ENCODE measurements at regions of chr17 and their contacts with region 1.

Region 1: DNA sequence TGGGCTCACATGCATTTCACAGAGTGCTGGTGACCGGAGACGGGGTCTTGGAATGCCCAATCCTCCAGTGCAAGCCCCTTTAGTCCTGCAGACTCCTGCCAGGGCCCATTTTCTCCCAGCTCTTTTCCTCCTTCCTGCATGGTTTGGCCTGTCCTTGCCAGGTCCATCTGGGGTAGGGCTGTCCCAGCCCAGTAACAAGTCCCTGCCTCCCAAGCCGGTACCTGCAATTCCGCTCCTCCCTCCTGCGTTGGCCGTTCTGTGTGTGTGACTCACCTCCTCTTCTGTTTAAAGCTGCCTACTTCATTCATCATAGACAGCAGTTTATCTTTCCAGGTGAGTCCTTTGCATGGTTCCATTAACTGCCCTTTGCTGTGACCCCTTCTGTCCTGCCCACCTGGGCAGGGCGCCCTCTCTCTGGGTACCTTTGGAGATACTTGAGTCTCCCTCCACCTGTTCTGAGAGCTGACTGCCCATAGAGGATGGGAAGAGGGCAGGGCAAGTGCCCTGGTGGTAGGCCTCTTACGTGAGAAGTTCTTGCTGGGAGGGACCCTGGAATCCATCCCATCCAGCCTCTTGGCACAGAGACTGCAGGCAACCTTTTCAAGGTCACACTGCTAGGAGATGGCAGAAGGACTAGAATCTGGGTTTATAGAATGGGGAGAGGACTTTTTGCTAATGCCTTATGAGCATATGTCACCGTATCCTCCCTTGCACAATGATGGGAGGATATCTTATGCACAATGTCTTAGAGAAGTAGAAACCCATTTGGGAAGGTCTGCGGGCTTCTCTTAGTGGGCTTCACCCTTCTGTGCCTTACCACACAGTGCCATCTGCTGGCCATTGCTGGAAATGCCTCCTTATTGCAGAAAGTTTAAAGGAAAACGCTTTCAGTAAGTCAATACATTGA is 29.7 kb upstream of the LGALS9 start:
- DNase-seq: peak; percentile 90
- ATAC-seq: peak; percentile 19; the same call in 1 of the 2 replicates
- H3K4me3 Mint-ChIP-seq: no peak overlapping the region
- H3K27ac Mint-ChIP-seq: no peak overlapping the region; the same call in 1 of the 2 replicates
- H3K4me1 Mint-ChIP-seq: peaks cover 7% of the 10 kb centered on the region
- H3K27me3 Mint-ChIP-seq: no peaks in the 10 kb centered on the region
- CTCF ChIP-seq: peak; percentile 83

Region 2: GRCh38 chr17:27332485-27333409 is 268.6 kb before region 1 on chr17:
- CTCF ChIA-PET with region 1: interaction called, 14 read pairs
- POLR2A ChIA-PET with region 1: no interaction called
- DNase-seq: peak; percentile 96
- ATAC-seq: peak; percentile 96
- H3K4me3 Mint-ChIP-seq: peak overlapping the region; percentile 67
- H3K27ac Mint-ChIP-seq: peak overlapping the region; percentile 89
- H3K4me1 Mint-ChIP-seq: peaks cover 50% of the 10 kb centered on the region
- H3K27me3 Mint-ChIP-seq: peaks cover 5% of the 10 kb centered on the region; the same call in 1 of the 2 replicates
- CTCF ChIP-seq: no peak

Region 3: GRCh38 chr17:27455914-27456680 is 145.2 kb before region 1 on chr17 and contains the start of gene KSR1:
- CTCF ChIA-PET with region 1: interaction called, 41 read pairs
- POLR2A ChIA-PET with region 1: interaction called, 4 read pairs
- DNase-seq: peak; percentile 91
- ATAC-seq: peak; percentile 83
- H3K4me3 Mint-ChIP-seq: peak within 1 kb of the TSS; percentile 90
- H3K27ac Mint-ChIP-seq: peak within 1 kb of the TSS; percentile 89
- H3K4me1 Mint-ChIP-seq: peaks cover 43% of the 10 kb centered on the region
- H3K27me3 Mint-ChIP-seq: peaks cover 12% of the 10 kb centered on the region
- CTCF ChIP-seq: no peak
- total RNA-seq, gene KSR1: 38.0 to 45.5 TPM (median 39.7 TPM) in 3 replicates

Region 4: GRCh38 chr17:27569257-27569722 is 32.0 kb before region 1 on chr17:
- CTCF ChIA-PET with region 1: interaction called, 12 read pairs
- POLR2A ChIA-PET with region 1: interaction called, 6 read pairs
- DNase-seq: peak; percentile 84
- ATAC-seq: peak; percentile 94
- H3K4me3 Mint-ChIP-seq: no peak overlapping the region
- H3K27ac Mint-ChIP-seq: peak overlapping the region; percentile 50
- H3K4me1 Mint-ChIP-seq: peaks cover 53% of the 10 kb centered on the region
- H3K27me3 Mint-ChIP-seq: no peaks in the 10 kb centered on the region
- CTCF ChIP-seq: peak; percentile 45

Region 5: GRCh38 chr17:27633312-27634025 is 32.1 kb after region 1 on chr17:
- CTCF ChIA-PET with region 1: interaction called, 12 read pairs
- POLR2A ChIA-PET with region 1: no interaction called
- DNase-seq: no peak
- ATAC-seq: no peak
- H3K4me3 Mint-ChIP-seq: no peak overlapping the region
- H3K27ac Mint-ChIP-seq: no peak overlapping the region
- H3K4me1 Mint-ChIP-seq: 0 out of 2 replicates have a peak, but pooled peaks cover 3% of the 10 kb centered on the region
- H3K27me3 Mint-ChIP-seq: no peaks in the 10 kb centered on the region
- CTCF ChIP-seq: no peak

Measured in WTC11 (cell line).